Stomach (tissue), 19 donors: ENCODE measurements at regions of chr6 and their contacts with region 1.

Region 1: GRCh38 chr6:142692942-142693341 is 252.0 kb downstream of the HIVEP2 start:
- DNase-seq: peak; percentile 58 to 86
- H3K4me3 ChIP-seq: no peak overlapping the region
- H3K27ac ChIP-seq: no peak overlapping the region
- H3K4me1 ChIP-seq: peaks cover 12 to 43% (median 22%) of the 10 kb centered on the region in 4 donors
- H3K27me3 ChIP-seq: no peaks in the 10 kb centered on the region
- CTCF ChIP-seq: peak in 5 of 7 experiments; percentile 82 to 94 (median 94)
- EP300 ChIP-seq: no peak
- POLR2A ChIP-seq: no peak

Region 2: DNA sequence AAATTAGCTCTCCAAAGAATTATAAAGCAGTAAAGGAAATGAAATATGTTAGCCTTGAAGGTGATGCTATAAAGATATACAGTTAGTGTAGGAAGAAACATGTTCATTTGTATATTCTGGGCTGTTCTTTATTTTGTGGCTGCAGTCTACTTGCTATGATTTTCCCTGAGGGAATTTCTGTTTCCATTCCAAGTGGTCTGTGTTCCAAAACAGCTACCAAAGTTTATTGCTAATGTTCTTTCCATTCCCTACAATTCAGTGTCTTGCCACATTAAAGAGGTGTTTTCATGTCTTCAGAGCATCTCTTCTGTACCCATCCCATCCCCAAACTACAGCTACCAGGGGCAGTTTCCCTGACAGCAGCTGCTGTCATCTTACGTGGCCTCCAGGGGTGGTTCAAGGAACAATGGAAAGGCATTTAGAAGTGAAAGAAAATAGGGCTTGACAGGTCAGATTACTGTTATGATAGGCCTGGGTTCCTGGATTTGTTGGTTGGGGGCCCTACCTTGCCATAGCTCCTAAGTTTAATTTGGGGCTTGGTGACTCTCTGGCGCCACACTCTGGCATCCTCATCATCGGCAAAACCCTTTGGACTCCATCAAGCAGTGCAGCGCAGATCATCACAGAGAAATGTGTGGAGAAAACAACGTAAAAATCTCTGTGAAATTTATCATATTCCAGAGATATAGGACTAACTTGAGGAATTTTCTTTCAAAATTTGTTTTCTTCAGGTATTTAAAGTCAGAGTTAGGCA is 333.9 kb after region 1 on chr6:
- intact Hi-C with region 1: loop called (anchors 5 kb)
- DNase-seq: peak; percentile 35 to 60
- H3K4me3 ChIP-seq: no peak overlapping the region
- H3K27ac ChIP-seq: no peak overlapping the region
- H3K4me1 ChIP-seq: no peaks in the 10 kb centered on the region
- H3K27me3 ChIP-seq: no peaks in the 10 kb centered on the region
- CTCF ChIP-seq: peak in 5 of 7 experiments; percentile 40 to 61 (median 55)
- EP300 ChIP-seq: no peak
- POLR2A ChIP-seq: no peak

Region 3: DNA sequence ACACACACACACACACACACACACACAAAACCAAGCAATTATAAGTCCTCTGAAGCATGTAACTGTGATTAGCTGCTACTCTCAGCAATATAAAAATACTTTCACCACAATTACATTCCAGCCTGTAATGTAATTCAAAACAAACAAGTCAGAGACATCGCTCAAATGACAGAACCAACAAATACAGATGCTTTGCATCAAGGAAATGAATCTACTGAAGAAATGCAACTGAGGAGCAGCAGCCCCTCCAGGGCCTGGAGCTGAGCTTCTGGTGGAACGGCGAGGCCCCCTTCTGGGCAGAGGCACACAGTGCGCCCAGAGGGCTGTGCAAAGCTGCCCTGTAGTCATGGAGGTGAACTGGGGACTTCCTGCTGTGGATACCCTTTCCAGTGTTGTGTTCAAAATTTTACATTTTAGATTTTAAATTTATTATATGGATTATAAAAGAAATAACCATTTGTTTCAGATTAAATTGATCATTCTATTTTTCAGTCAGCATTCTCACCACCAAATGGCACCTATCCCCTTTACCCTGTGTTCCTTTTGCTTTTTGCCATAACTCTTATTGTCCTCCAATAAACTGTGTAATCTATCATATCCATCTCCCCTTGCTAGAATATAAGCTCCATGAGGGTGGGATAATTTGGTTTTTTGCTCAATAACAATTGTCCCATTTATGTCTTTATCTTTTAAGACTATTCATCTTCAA is 734.3 kb after region 1 on chr6:
- intact Hi-C with region 1: loop called (anchors 10 kb)
- DNase-seq: peak; percentile 69 to 92
- H3K4me3 ChIP-seq: no peak overlapping the region
- H3K27ac ChIP-seq: no peak overlapping the region
- H3K4me1 ChIP-seq: no peaks in the 10 kb centered on the region
- H3K27me3 ChIP-seq: no peaks in the 10 kb centered on the region
- CTCF ChIP-seq: peak in 5 of 7 experiments; percentile 74 to 90 (median 84)
- EP300 ChIP-seq: no peak
- POLR2A ChIP-seq: no peak